ENCODE measurements at regions of chr7 and their contacts with region 1.

Region 1: GRCh38 chr7:148962823-148963582 is 65.3 kb downstream of the PDIA4 start:
- DNase-seq: peak; percentile 33 to 84 (median 63)
- ATAC-seq: peak; percentile 51
- H3K4me3 ChIP-seq: peak overlapping the region; percentile 65 to 74
- H3K4me3 Mint-ChIP-seq: peak overlapping the region; percentile 92
- H3K27ac ChIP-seq: peak overlapping the region; percentile 69 to 80
- H3K27ac Mint-ChIP-seq: peak overlapping the region; percentile 90
- H3K4me1 ChIP-seq: peaks cover 12% of the 10 kb centered on the region
- H3K4me1 Mint-ChIP-seq: peaks cover 24% of the 10 kb centered on the region
- H3K27me3 ChIP-seq: no peaks in the 10 kb centered on the region
- H3K27me3 Mint-ChIP-seq: no peaks in the 10 kb centered on the region
- CTCF ChIP-seq: peak; percentile 77

Region 2: DNA sequence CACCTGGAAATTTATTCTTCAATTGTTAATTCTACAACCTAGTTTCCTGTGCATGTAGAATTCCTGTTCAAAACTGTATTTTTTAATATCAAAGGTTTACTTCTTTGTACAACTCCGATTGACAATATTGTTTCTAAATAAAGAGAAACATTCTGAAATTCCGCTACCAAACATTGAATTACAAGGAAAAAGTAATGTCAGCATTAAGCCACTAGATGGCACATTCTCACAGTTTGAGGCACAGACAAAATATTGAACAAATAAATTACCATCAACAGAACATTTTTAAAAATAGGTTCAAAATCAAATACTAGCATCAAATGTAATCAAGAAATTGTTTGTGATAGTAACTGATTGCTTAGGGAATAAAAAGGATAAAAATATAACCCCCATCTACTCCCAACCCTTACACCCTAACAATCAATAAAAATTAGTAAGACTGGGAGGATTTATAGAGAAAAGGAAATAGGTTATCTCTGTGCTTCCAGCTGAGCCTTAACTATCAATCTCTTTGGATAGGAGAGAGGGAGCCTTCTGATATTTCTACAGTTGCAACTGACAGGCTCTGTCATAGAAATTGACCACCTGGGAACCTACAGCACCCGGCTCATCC is 459.0 kb before region 1 on chr7:
- CTCF ChIA-PET with region 1: interaction called, 22 read pairs
- POLR2A ChIA-PET with region 1: no interaction called
- intact Hi-C with region 1: loop called (anchors 1 kb)
- DNase-seq: peak in 3 of 9 experiments; percentile 7 to 62 (median 52)
- ATAC-seq: no peak
- H3K4me3 ChIP-seq: no peak overlapping the region
- H3K4me3 Mint-ChIP-seq: no peak overlapping the region
- H3K27ac ChIP-seq: no peak overlapping the region
- H3K27ac Mint-ChIP-seq: no peak overlapping the region
- H3K4me1 ChIP-seq: no peaks in the 10 kb centered on the region
- H3K4me1 Mint-ChIP-seq: no peaks in the 10 kb centered on the region
- H3K27me3 ChIP-seq: no peaks in the 10 kb centered on the region
- H3K27me3 Mint-ChIP-seq: peaks cover 12% of the 10 kb centered on the region
- CTCF ChIP-seq: peak; percentile 92

Region 3: DNA sequence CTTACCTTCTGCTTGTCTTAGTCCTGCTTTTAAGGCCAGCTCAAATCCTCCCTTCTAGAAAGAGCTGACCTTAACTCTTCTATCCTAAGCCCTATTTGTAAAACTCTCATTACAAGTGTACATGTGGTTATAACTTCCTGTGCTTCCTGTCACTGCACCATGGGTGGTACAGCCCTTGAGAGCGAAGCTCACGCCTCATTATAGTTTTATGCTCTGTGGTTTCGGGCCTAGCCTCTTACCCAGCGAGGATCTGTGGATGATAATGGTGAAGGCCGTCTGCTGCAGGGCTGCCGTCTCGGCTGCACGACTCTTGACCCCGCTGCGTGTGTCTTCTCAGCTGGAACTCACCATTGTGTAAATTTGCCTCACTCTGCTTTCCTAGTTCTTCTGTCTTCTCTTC is 189.7 kb before region 1 on chr7:
- CTCF ChIA-PET with region 1: no interaction called
- POLR2A ChIA-PET with region 1: interaction called, 3 read pairs
- intact Hi-C with region 1: loop called in 1 of 2 experiments (anchors 10 kb)
- DNase-seq: peak; percentile 2 to 76 (median 37)
- ATAC-seq: peak; percentile 90
- H3K4me3 ChIP-seq: no peak overlapping the region
- H3K4me3 Mint-ChIP-seq: peak overlapping the region; percentile 68
- H3K27ac ChIP-seq: peak overlapping the region; percentile 12 to 71
- H3K27ac Mint-ChIP-seq: peak overlapping the region; percentile 89
- H3K4me1 ChIP-seq: peaks cover 20% of the 10 kb centered on the region
- H3K4me1 Mint-ChIP-seq: peaks cover 30% of the 10 kb centered on the region
- H3K27me3 ChIP-seq: no peaks in the 10 kb centered on the region
- H3K27me3 Mint-ChIP-seq: no peaks in the 10 kb centered on the region
- CTCF ChIP-seq: no peak

Region 4: DNA sequence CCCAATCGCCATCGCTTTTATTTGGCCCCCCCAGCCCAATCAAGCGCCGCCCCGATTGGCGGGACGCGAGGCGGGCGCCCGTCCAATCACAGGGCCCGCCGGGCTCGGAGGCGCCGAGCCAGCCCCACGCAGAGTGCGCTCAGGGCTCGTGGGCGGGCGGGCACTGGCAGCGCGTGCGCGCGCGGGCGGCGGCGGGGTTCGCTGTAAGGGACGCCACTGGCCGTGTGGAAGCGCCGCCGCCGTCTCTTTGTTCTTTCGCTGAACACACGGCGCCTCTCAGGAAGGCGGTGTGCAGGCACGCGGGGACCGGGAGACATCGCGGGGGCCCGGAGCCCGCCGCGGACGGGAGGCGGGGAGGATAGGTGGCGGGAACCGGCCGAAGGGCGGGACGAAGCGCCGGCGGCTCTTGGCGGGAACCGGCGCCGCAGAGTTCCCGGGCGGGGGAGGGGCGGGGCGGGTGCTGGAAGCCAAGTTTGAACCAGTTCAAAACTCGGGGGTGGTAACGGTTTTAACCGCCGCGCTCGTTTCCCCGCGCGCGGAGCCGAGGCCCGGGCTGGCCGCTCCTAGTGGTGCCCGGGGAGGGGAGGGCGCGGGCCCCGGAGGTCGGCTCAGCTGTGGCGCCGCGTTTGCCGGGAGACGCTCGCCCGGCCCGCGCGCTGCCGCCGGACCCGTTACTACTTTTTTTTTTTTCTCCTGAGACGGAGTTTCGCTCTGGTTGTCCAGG is 78.5 kb before region 1 on chr7:
- CTCF ChIA-PET with region 1: interaction called, 3 read pairs
- POLR2A ChIA-PET with region 1: interaction called, 5 read pairs
- intact Hi-C with region 1: loop called (anchors 1 to 5 kb)
- DNase-seq: peak; percentile 87 to 97 (median 93)
- ATAC-seq: peak; percentile 89
- H3K4me3 ChIP-seq: peak overlapping the region; percentile 54 to 61
- H3K4me3 Mint-ChIP-seq: peak overlapping the region; percentile 87
- H3K27ac ChIP-seq: peak overlapping the region; percentile 47 to 67
- H3K27ac Mint-ChIP-seq: peak overlapping the region; percentile 89
- H3K4me1 ChIP-seq: peaks cover 8% of the 10 kb centered on the region
- H3K4me1 Mint-ChIP-seq: peaks cover 24% of the 10 kb centered on the region
- H3K27me3 ChIP-seq: peaks cover 0 to 4% of the 10 kb centered on the region in 2 experiments
- H3K27me3 Mint-ChIP-seq: no peaks in the 10 kb centered on the region
- CTCF ChIP-seq: no peak

Region 5: GRCh38 chr7:148987010-148987750 is 24.2 kb after region 1 on chr7:
- CTCF ChIA-PET with region 1: interaction called, 14 read pairs
- POLR2A ChIA-PET with region 1: no interaction called
- intact Hi-C with region 1: loop called in 1 of 2 experiments (anchors 1 kb)
- DNase-seq: peak; percentile 43 to 93 (median 80)
- ATAC-seq: peak; percentile 76
- H3K4me3 ChIP-seq: peak overlapping the region; percentile 82 to 97
- H3K4me3 Mint-ChIP-seq: peak overlapping the region; percentile 96
- H3K27ac ChIP-seq: peak overlapping the region; percentile 74 to 93
- H3K27ac Mint-ChIP-seq: peak overlapping the region; percentile 96
- H3K4me1 ChIP-seq: peaks cover 41% of the 10 kb centered on the region
- H3K4me1 Mint-ChIP-seq: peaks cover 52% of the 10 kb centered on the region
- H3K27me3 ChIP-seq: no peaks in the 10 kb centered on the region
- H3K27me3 Mint-ChIP-seq: no peaks in the 10 kb centered on the region
- CTCF ChIP-seq: no peak

Measured in CD8-positive, alpha-beta T cell (primary cell).